Spleen (tissue), 13 donors: ENCODE measurements at regions of chr12 and their contacts with region 1.

Region 1: GRCh38 chr12:29996993-29997392 is 213.3 kb upstream of the TMTC1 start:
- DNase-seq: no peak
- H3K4me3 ChIP-seq: no peak overlapping the region
- H3K27ac ChIP-seq: no peak overlapping the region
- H3K4me1 ChIP-seq: no peaks in the 10 kb centered on the region
- H3K27me3 ChIP-seq: no peaks in the 10 kb centered on the region
- CTCF ChIP-seq: no peak
- POLR2A ChIP-seq: no peak

Region 2: GRCh38 chr12:29741342-29742241 is 255.4 kb before region 1 on chr12:
- intact Hi-C with region 1: no loop called
- DNase-seq: no peak
- H3K4me3 ChIP-seq: no peak overlapping the region
- H3K27ac ChIP-seq: peak overlapping the region in 3 of 8 donors; percentile 18 to 47 (median 32)
- H3K4me1 ChIP-seq: peaks cover 0 to 27% (median 4%) of the 10 kb centered on the region in 6 donors
- H3K27me3 ChIP-seq: no peaks in the 10 kb centered on the region
- CTCF ChIP-seq: no peak
- POLR2A ChIP-seq: no peak

Region 3: GRCh38 chr12:29844667-29845066 is 152.3 kb before region 1 on chr12:
- intact Hi-C with region 1: no loop called
- DNase-seq: no peak
- H3K4me3 ChIP-seq: no peak overlapping the region
- H3K27ac ChIP-seq: no peak overlapping the region
- H3K4me1 ChIP-seq: no peaks in the 10 kb centered on the region
- H3K27me3 ChIP-seq: no peaks in the 10 kb centered on the region
- CTCF ChIP-seq: no peak
- POLR2A ChIP-seq: no peak

Region 4: GRCh38 chr12:30026621-30027234 is 29.7 kb after region 1 on chr12:
- intact Hi-C with region 1: loop called (anchors 2 kb)
- DNase-seq: no peak
- H3K4me3 ChIP-seq: no peak overlapping the region
- H3K27ac ChIP-seq: no peak overlapping the region
- H3K4me1 ChIP-seq: no peaks in the 10 kb centered on the region
- H3K27me3 ChIP-seq: no peaks in the 10 kb centered on the region
- CTCF ChIP-seq: no peak
- POLR2A ChIP-seq: no peak